Activated T-helper 1 cell treated with anti-CD3 and anti-CD28 coated beads, Interleukin-12 subunit alpha, Interleukin-12 subunit beta, Interleukin-2, Interleukin-4 antibody, amounts not matched to agents 30 ng/mL and 10 ng/mL and 1 ng/mL, durations not matched to agents 14 hours and 24 hours and 36 hours (primary cell): ENCODE measurements at regions of chr4 and their contacts with region 1.

Region 1: GRCh38 chr4:102500696-102501446 is at the start of gene NFKB1:
- DNase-seq: peak; percentile 83
- H3K4me3 Mint-ChIP-seq: peak within 1 kb of the TSS; percentile 94
- H3K27ac Mint-ChIP-seq: peak within 1 kb of the TSS; percentile 91
- H3K4me1 Mint-ChIP-seq: peaks cover 33% of the 10 kb centered on the region
- H3K27me3 Mint-ChIP-seq: peaks cover 5% of the 10 kb centered on the region
- total RNA-seq, gene NFKB1: 139 and 145 TPM in 2 replicates

Region 2: DNA sequence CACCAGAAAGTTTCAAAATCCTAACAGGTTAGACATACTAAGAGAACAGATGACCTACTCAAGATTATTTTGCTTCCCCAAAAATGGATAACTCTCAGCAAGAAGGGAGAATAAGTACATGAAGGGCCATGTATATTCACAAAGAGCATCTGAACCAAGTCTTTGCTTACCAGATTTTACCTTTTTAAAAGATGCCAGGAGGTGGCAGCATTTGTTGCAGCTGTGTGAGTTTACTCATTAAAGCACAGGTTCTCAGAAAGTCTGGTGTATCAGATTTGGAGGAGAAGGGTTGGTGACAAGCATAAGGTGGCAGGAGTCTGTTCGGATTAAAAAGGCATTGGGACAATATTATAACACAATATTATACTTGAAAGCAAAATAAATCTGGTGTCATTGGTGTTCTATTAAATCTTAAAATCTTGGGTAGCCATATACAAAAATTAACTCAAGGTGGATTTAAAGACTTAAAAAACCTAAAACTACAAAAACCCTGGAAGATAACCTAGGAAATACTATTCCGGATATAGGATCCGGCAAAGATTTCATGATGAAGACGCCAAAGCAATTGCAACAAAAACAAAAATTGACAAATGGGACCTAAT is 51.0 kb before region 1 on chr4:
- intact Hi-C with region 1: loop called (anchors 1 kb)
- DNase-seq: peak; percentile 52
- H3K4me3 Mint-ChIP-seq: no peak overlapping the region
- H3K27ac Mint-ChIP-seq: no peak overlapping the region
- H3K4me1 Mint-ChIP-seq: peaks cover 36% of the 10 kb centered on the region
- H3K27me3 Mint-ChIP-seq: peaks cover under 1% of the 10 kb centered on the region

Region 3: DNA sequence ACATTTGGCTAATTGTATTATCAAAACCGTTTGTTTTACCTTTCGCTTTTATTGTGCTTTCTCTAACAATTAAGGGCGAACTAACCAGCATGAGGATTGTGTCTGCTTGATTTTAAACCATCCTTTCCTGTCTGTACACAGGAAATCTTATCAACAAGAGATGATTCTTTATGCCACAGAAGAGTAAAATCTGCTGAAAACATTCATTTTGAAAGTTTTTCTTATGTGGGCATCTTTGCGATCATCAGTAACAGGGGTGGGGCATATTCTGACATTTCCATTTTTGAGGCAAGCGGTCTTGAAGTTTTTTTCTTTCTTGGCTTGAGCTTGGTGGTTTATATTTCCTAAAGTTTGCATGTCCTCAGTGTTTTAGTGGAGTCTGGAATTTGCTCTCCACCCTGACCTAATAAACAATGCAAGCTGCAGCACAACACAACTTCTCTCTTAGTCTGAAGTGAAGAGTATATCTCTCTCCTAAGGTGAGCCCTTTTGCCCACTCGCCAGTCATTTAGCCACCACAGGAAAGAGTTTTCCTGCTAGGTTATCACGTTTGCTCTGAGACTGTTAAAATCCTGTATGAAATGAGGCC is 26.9 kb after region 1 on chr4:
- intact Hi-C with region 1: loop called (anchors 1 kb)
- DNase-seq: no peak
- H3K4me3 Mint-ChIP-seq: peak overlapping the region; percentile 69
- H3K27ac Mint-ChIP-seq: peak overlapping the region; percentile 66
- H3K4me1 Mint-ChIP-seq: peaks cover 77% of the 10 kb centered on the region
- H3K27me3 Mint-ChIP-seq: no peaks in the 10 kb centered on the region

Region 4: DNA sequence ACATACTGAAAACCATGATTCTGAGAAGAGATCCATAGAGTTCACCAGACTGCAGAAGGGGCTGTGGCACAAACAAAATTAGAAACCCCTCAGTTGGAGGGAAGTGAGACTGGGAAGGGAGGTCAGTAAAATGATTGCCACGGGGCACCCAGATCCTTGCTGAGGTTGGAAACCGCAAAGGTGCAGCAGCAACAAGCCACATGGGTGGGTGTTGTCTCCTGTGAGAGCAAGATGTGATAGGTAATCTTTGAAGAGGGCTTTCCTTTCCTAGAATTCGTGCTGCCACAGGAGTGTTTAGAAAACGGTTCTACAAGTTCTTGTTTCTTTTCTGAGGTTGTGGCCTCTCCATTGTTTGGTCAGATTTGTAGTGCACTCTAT is 85.8 kb after region 1 on chr4:
- intact Hi-C with region 1: loop called (anchors 2 kb)
- DNase-seq: peak; percentile 61
- H3K4me3 Mint-ChIP-seq: peak overlapping the region; percentile 47
- H3K27ac Mint-ChIP-seq: peak overlapping the region; percentile 60
- H3K4me1 Mint-ChIP-seq: peaks cover 86% of the 10 kb centered on the region
- H3K27me3 Mint-ChIP-seq: no peaks in the 10 kb centered on the region

Region 5: DNA sequence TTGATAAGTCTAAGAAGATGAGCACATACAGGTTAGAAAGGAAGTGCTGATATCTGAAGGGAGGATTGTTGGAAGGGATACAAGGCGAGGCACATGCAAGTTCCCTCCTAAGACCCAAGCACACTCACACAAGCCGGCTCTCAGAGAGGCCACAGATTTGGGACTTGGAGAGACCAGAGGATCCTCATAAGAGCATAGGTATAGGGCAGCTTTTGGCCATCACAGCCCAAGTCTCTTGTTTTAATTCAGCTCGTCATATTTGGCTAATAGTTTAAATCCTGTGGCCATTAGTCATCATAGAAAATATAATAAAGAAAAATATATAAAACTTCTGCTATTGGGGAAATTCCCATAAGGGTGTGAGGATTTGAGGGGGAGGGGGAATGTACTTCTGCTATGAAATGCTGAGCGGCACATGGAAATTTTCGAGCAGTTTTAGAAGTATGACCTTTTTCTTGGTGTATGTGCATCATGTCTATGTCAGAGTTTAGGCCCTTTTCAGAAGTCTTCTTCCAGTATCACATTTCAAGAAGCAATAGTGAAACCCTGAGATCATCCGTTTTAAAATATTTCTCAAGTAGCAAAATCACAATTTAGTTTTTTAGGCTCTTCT is 98.0 kb after region 1 on chr4:
- intact Hi-C with region 1: no loop called
- DNase-seq: no peak
- H3K4me3 Mint-ChIP-seq: peak overlapping the region; percentile 37
- H3K27ac Mint-ChIP-seq: peak overlapping the region; percentile 89
- H3K4me1 Mint-ChIP-seq: peaks cover 80% of the 10 kb centered on the region
- H3K27me3 Mint-ChIP-seq: no peaks in the 10 kb centered on the region

Region 6: GRCh38 chr4:102760645-102761295 is 259.9 kb after region 1 on chr4 and contains the start of gene MANBA:
- intact Hi-C with region 1: loop called (anchors 2 kb)
- DNase-seq: peak; percentile 77
- H3K4me3 Mint-ChIP-seq: peak within 1 kb of the TSS; percentile 96
- H3K27ac Mint-ChIP-seq: peak within 1 kb of the TSS; percentile 90
- H3K4me1 Mint-ChIP-seq: peaks cover 31% of the 10 kb centered on the region
- H3K27me3 Mint-ChIP-seq: peaks cover 13% of the 10 kb centered on the region
- total RNA-seq, gene MANBA: 7.5 and 8.0 TPM in 2 replicates

Region 7: DNA sequence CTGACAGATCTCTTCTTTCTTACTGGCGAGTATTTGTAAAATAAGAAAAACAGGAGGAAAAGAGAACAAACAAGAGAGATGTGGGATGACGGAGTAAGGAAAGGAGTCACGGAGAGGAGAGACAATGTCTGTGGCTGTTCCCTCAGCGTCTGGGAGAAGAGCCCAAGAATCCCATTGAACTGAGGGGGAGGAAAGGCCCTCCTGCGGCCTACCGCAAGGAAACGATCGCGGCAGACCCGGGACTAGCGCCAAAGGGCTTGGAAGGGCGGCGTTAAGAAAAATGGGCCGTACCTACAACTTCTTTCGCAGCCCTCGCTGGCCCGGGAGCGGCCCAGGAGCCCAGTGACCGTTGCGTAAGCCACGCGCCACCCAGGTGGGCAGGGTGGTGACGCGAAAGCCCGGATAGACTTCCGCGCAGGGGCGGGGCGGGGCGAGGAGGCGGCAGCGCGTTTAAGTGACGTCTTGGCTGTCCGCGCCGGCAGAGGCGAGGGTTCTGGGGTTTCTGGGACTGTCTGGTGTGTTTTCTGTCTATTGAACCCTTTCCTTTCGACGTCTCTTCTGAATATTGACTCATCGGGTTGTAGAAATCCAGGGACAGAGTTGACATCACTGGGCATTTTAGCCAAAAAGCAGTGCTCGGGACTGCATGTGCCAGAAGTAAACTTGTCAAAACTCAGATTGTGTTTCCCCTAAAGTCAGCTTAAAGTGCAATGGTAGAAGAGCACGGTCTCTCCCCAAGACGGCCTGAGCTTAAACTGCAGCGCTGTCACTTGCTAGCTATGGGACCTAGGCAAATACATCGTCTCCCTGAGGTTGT is 518.6 kb after region 1 on chr4 and contains the start of gene SLC9B1:
- intact Hi-C with region 1: loop called (anchors 5 kb)
- DNase-seq: peak; percentile 93
- H3K4me3 Mint-ChIP-seq: peak within 1 kb of the TSS; percentile 90
- H3K27ac Mint-ChIP-seq: peak within 1 kb of the TSS; percentile 96
- H3K4me1 Mint-ChIP-seq: peaks cover 25% of the 10 kb centered on the region
- H3K27me3 Mint-ChIP-seq: no peaks in the 10 kb centered on the region
- total RNA-seq, gene SLC9B1: 0.51 and 0.52 TPM in 2 replicates

Region 8: DNA sequence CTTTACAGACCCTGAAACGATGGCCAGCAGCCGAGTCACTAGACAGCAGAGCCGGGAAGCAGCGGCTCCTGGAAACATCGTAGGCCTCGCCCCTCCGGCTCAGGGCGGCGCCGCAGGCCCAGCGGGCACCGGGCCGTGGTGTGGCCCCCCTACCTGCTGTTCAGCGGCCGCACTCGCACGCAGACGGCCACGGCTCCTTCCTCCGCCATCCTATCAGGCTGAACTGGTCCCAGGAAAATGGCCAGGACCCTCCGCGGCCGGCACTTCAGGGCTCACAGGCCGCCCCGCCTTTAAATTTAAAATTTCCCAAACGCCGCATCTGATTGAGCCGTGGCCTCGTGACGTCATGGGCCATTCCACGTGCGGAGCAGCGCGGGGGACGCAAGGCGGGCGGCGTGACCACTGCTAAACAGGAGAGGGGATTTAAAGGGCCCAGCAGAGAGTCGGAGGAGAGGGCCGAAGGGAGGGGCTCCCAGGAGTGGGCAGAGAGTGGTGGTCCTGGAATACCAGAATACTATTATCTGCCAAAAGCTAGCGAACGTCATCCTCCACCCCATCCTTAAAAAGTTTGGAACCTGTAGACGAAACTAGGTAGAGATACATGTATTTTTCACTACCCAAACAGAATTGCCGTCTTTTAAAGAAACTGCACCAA is 697.4 kb after region 1 on chr4 and contains the start of gene CENPE:
- intact Hi-C with region 1: loop called (anchors 5 kb)
- DNase-seq: peak; percentile 85
- H3K4me3 Mint-ChIP-seq: peak within 1 kb of the TSS; percentile 88
- H3K27ac Mint-ChIP-seq: peak within 1 kb of the TSS; percentile 99
- H3K4me1 Mint-ChIP-seq: peaks cover 23% of the 10 kb centered on the region
- H3K27me3 Mint-ChIP-seq: peaks cover 6% of the 10 kb centered on the region
- total RNA-seq, gene CENPE: 18.7 and 22.6 TPM in 2 replicates